A549 (cell line): ENCODE measurements at regions of chr1 and their contacts with region 1.

Region 1: GRCh38 chr1:205061665-205062069 is 18.7 kb downstream of the CNTN2 start:
- DNase-seq: peak; percentile 62 to 78
- ATAC-seq: peak; percentile 53 to 86; a peak in 4 of 6 replicates
- H3K4me3 ChIP-seq: no peak overlapping the region
- H3K27ac ChIP-seq: no peak overlapping the region
- H3K4me1 ChIP-seq: no peaks in the 10 kb centered on the region
- CTCF ChIP-seq: peak; percentile 88
- EP300 ChIP-seq: no peak
- POLR2A ChIP-seq: no peak
- RAD21 ChIP-seq: peak; percentile 80 to 89

Region 2: GRCh38 chr1:204980840-204981405 is 80.7 kb before region 1 on chr1:
- CTCF ChIA-PET with region 1: interaction called, 115 read pairs
- POLR2A ChIA-PET with region 1: no interaction called
- DNase-seq: no peak
- ATAC-seq: no peak
- H3K4me3 ChIP-seq: no peak overlapping the region
- H3K27ac ChIP-seq: no peak overlapping the region
- H3K4me1 ChIP-seq: no peaks in the 10 kb centered on the region
- CTCF ChIP-seq: no peak
- EP300 ChIP-seq: no peak
- POLR2A ChIP-seq: no peak
- RAD21 ChIP-seq: no peak

Region 3: GRCh38 chr1:205003393-205004131 is 58.1 kb before region 1 on chr1:
- CTCF ChIA-PET with region 1: interaction called, 18 read pairs
- POLR2A ChIA-PET with region 1: no interaction called
- DNase-seq: no peak
- ATAC-seq: no peak; a peak in 1 of 6 replicates
- H3K4me3 ChIP-seq: no peak overlapping the region
- H3K27ac ChIP-seq: no peak overlapping the region
- H3K4me1 ChIP-seq: no peaks in the 10 kb centered on the region
- CTCF ChIP-seq: no peak
- EP300 ChIP-seq: no peak
- POLR2A ChIP-seq: no peak
- RAD21 ChIP-seq: no peak

Region 4: GRCh38 chr1:205032508-205032907 is 29.2 kb before region 1 on chr1:
- CTCF ChIA-PET with region 1: interaction called, 34 read pairs
- POLR2A ChIA-PET with region 1: no interaction called
- DNase-seq: no peak
- ATAC-seq: no peak
- H3K4me3 ChIP-seq: no peak overlapping the region
- H3K27ac ChIP-seq: no peak overlapping the region
- H3K4me1 ChIP-seq: no peaks in the 10 kb centered on the region
- CTCF ChIP-seq: no peak
- EP300 ChIP-seq: no peak
- POLR2A ChIP-seq: no peak
- RAD21 ChIP-seq: no peak

Region 5: DNA sequence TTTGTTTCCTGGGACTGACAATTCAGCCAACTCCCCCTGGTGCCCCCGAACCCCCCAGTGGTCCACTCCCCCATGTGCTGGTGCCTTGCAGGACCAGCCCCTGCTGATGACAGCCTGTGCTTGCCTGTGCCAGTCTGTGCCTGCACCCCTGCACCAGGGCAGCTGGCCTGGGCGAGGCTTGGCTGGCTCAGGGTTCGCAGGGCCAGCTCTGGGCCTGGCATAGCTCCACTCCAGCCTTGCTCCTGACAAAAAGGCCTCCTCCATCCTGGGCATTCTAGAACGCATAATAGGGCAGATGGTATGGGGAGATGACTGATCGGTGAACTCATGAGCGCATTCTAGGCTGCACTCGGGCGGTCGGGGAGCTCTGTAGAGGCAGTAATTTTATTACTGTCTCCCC is 13.3 kb before region 1 on chr1:
- CTCF ChIA-PET with region 1: interaction called, 39 read pairs
- POLR2A ChIA-PET with region 1: interaction called, 3 read pairs
- DNase-seq: no peak
- ATAC-seq: no peak
- H3K4me3 ChIP-seq: no peak overlapping the region
- H3K27ac ChIP-seq: no peak overlapping the region
- H3K4me1 ChIP-seq: peaks cover under 1% of the 10 kb centered on the region; the same call in 1 of the 3 replicates
- CTCF ChIP-seq: no peak
- EP300 ChIP-seq: no peak
- POLR2A ChIP-seq: no peak
- RAD21 ChIP-seq: no peak

Region 6: GRCh38 chr1:205095422-205095821 is 33.8 kb after region 1 on chr1:
- CTCF ChIA-PET with region 1: interaction called, 29 read pairs
- POLR2A ChIA-PET with region 1: no interaction called
- DNase-seq: no peak
- ATAC-seq: no peak
- H3K4me3 ChIP-seq: no peak overlapping the region
- H3K27ac ChIP-seq: no peak overlapping the region
- H3K4me1 ChIP-seq: no peaks in the 10 kb centered on the region
- CTCF ChIP-seq: no peak
- EP300 ChIP-seq: no peak
- POLR2A ChIP-seq: no peak
- RAD21 ChIP-seq: no peak